ENCODE measurements at regions of chr2 and their contacts with region 1.

Region 1: GRCh38 chr2:71798266-71799012 is 345.1 kb downstream of the DYSF start:
- DNase-seq: peak; percentile 16
- H3K4me3 Mint-ChIP-seq: no peak overlapping the region
- H3K27ac Mint-ChIP-seq: no peak overlapping the region
- H3K4me1 Mint-ChIP-seq: no peaks in the 10 kb centered on the region
- H3K27me3 Mint-ChIP-seq: peaks cover 2% of the 10 kb centered on the region

Region 2: DNA sequence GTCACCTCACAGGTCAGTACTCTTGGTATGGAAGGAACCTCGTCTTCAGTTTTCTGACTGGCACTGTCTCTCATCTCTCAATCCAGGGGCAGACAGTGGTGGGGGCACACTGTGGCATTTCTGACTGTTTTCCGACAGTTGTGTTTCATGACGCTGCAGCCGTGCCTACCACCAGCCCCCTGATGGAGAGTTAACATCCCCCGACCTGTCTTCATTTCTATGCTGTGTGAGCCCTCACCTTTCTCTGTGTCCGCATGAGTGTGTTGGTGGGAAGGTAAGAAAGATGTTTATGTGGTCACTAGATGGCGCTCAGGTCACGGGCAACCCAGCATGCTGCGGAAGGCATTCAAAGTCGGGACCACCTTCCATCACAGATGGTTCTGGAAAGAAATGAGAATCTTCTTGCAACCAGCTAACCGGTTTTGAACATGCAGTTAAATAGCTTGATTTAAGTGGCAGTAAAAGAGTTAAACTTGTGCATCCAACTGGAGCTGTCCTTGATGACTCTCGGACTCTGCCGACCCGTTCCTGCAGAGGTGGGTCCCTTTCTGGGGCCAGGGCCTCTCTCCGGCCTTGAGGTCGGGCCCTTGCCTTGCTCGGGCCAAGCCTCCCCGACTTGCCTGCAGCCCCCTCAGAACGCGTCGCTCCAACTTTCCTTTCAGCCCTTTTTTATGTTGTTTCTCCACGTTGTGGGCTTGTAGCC is 252.7 kb before region 1 on chr2:
- CTCF ChIA-PET with region 1: interaction called, 16 read pairs
- POLR2A ChIA-PET with region 1: no interaction called
- intact Hi-C with region 1: loop called (anchors 5 kb)
- DNase-seq: peak; percentile 58
- H3K4me3 Mint-ChIP-seq: peak overlapping the region; percentile 42
- H3K27ac Mint-ChIP-seq: no peak overlapping the region
- H3K4me1 Mint-ChIP-seq: peaks cover 9% of the 10 kb centered on the region
- H3K27me3 Mint-ChIP-seq: peaks cover 19% of the 10 kb centered on the region

Region 3: GRCh38 chr2:71778936-71779773 is 19.3 kb before region 1 on chr2:
- CTCF ChIA-PET with region 1: no interaction called
- POLR2A ChIA-PET with region 1: no interaction called
- intact Hi-C with region 1: no loop called
- DNase-seq: no peak
- H3K4me3 Mint-ChIP-seq: no peak overlapping the region
- H3K27ac Mint-ChIP-seq: no peak overlapping the region
- H3K4me1 Mint-ChIP-seq: no peaks in the 10 kb centered on the region
- H3K27me3 Mint-ChIP-seq: peaks cover 4% of the 10 kb centered on the region

Region 4: DNA sequence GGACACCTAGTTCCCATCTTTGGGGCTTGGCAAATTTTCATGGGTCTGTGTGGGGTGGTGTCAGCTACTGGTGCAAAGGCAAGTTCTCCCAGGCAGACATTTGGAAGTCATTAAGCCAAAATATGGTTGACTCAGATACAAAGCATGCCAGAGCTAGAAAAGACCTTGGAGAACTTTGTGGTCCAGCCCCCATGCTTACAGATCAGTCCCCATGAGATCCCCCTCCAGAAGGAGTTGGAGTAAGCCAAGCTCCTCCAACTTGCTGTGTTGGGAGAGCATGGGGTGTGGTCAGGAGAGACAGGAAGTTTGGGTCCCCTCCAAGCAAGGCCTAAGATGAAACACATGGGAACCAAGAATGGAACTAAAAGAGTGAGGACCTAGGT is 124.7 kb after region 1 on chr2:
- CTCF ChIA-PET with region 1: no interaction called
- POLR2A ChIA-PET with region 1: no interaction called
- intact Hi-C with region 1: no loop called
- DNase-seq: no peak
- H3K4me3 Mint-ChIP-seq: no peak overlapping the region
- H3K27ac Mint-ChIP-seq: no peak overlapping the region
- H3K4me1 Mint-ChIP-seq: no peaks in the 10 kb centered on the region
- H3K27me3 Mint-ChIP-seq: no peaks in the 10 kb centered on the region

Region 5: GRCh38 chr2:71933467-71934319 is 135.3 kb after region 1 on chr2:
- CTCF ChIA-PET with region 1: no interaction called
- POLR2A ChIA-PET with region 1: no interaction called
- intact Hi-C with region 1: loop called (anchors 5 kb)
- DNase-seq: no peak
- H3K4me3 Mint-ChIP-seq: no peak overlapping the region
- H3K27ac Mint-ChIP-seq: no peak overlapping the region
- H3K4me1 Mint-ChIP-seq: no peaks in the 10 kb centered on the region
- H3K27me3 Mint-ChIP-seq: peaks cover 3% of the 10 kb centered on the region